Activated CD8-positive, alpha-beta T cell treated with anti-CD3 and anti-CD28 coated beads for 36 hours (primary cell): ENCODE measurements at regions of chr6 and their contacts with region 1.

Region 1: GRCh38 chr6:149545754-149546528 is at the start of gene PPIL4:
- DNase-seq: peak; percentile 97
- ATAC-seq: peak; percentile 90
- H3K4me3 Mint-ChIP-seq: peak within 1 kb of the TSS; percentile 92
- H3K27ac Mint-ChIP-seq: peak within 1 kb of the TSS; percentile 96
- H3K4me1 Mint-ChIP-seq: peaks cover 37% of the 10 kb centered on the region
- H3K27me3 Mint-ChIP-seq: no peaks in the 10 kb centered on the region
- CTCF ChIP-seq: peak; percentile 97
- total RNA-seq, gene PPIL4: 20.8 to 21.9 TPM

Region 2: DNA sequence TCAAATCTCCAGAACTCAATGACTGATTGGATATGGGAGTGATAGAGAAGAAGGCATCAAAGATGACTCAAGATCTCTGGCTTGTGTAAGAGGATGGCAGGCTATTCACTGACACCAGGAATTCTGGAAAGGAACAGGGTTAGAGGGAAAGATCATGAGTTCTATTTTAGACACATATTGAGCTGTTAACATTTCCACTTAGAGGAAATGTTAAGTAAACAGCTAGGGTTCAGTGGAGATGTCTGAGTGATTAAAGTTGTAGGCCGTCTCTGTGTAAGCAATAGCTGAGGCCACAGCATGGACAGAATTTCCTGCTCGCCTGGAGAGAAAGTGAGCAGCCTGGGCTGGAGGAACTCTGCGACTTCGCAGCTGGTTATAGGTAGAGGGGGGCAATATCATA is 82.2 kb before region 1 on chr6:
- CTCF ChIA-PET with region 1: no interaction called
- POLR2A ChIA-PET with region 1: no interaction called
- intact Hi-C with region 1: no loop called
- DNase-seq: no peak
- ATAC-seq: no peak
- H3K4me3 Mint-ChIP-seq: no peak overlapping the region
- H3K27ac Mint-ChIP-seq: no peak overlapping the region
- H3K4me1 Mint-ChIP-seq: peaks cover 24% of the 10 kb centered on the region
- H3K27me3 Mint-ChIP-seq: no peaks in the 10 kb centered on the region
- CTCF ChIP-seq: no peak

Region 3: DNA sequence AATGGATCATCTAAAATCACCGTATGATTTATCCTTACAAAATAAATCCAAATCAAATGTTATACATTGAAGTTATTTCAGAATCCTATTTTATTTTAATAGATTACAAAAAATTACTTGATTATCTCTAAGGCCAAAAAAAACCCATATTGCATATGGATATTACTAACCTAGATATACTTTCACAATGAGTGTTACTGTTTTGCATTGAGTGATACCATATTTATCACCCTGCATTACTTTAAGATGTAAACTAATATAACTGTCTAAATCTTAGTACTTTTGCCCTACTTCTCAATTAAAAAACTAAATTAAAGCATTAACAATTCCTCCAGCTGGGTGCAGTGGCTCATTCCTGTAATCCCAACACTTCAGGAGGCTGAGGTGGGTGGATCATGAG is 11.2 kb before region 1 on chr6:
- CTCF ChIA-PET with region 1: interaction called, 11 read pairs
- POLR2A ChIA-PET with region 1: no interaction called
- intact Hi-C with region 1: no loop called
- DNase-seq: no peak
- ATAC-seq: no peak
- H3K4me3 Mint-ChIP-seq: no peak overlapping the region
- H3K27ac Mint-ChIP-seq: no peak overlapping the region
- H3K4me1 Mint-ChIP-seq: peaks cover 13% of the 10 kb centered on the region
- H3K27me3 Mint-ChIP-seq: no peaks in the 10 kb centered on the region
- CTCF ChIP-seq: no peak

Region 4: DNA sequence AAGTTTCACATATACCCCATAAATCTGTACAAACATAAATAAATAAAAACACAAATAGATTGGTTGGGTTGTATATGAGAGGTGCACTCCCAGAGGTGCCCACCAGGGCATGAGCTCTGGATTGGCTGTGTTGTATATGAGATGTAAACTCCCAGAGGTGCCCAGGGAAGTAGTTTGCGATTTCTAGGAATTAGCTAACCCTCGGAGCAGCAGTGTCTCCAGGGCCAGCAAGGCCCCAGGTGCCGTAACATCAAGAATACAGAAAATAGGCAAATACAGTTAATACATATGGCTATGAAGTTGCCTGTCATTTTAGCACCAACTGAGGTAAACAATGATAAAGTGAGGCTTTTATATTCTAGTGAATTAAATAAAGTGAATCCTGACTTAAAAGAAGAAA is 14.8 kb after region 1 on chr6:
- CTCF ChIA-PET with region 1: interaction called, 27 read pairs
- POLR2A ChIA-PET with region 1: interaction called, 12 read pairs
- intact Hi-C with region 1: no loop called
- DNase-seq: peak; percentile 46
- ATAC-seq: no peak
- H3K4me3 Mint-ChIP-seq: no peak overlapping the region
- H3K27ac Mint-ChIP-seq: no peak overlapping the region
- H3K4me1 Mint-ChIP-seq: peaks cover 13% of the 10 kb centered on the region
- H3K27me3 Mint-ChIP-seq: peaks cover 3% of the 10 kb centered on the region
- CTCF ChIP-seq: peak; percentile 61

Region 5: DNA sequence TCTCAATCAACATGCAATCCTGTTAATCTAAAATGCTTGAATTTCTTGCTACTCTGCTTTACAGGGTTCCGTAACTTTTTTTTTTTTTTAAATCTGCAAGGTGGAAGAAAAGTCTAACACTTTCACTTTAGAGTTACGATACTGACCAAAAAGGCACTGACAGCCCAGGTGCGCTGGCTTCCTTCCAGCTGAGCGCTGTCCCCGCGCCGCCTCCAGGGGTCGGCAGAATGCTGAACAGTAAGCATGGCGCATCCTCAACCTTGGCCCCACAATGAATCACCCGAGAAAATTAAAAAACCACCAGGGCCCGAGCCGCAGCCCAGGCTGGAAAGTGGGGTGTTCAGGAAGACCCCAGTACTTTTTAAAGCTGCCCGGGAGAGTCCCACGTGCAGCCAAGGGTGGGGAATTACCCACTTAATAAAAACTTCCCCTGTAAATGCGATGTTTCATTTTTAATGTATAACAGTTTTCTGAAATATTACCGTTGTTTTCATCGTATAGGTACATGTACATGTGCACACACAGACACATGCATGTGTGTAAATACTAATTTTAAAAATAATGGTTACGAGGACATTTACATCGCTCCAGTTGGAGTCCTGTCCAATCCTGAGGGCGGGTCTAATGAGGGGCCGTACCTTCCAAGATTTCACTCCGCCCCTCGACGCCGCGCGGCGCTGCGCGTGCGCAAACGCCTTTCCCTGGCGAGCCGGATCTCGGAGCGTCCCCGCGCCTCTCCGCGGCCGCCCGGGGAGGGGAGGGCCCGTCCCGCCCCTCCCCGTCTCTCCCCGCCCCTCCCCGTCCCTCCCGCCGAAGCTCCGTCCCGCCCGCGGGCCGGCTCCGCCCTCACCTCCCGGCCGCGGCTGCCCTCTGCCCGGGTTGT is 19.8 kb after region 1 on chr6 and contains the start of gene GINM1:
- CTCF ChIA-PET with region 1: interaction called, 27 read pairs
- POLR2A ChIA-PET with region 1: interaction called, 12 read pairs
- intact Hi-C with region 1: no loop called
- DNase-seq: peak; percentile 97
- ATAC-seq: peak; percentile 90
- H3K4me3 Mint-ChIP-seq: peak within 1 kb of the TSS; percentile 93
- H3K27ac Mint-ChIP-seq: peak within 1 kb of the TSS; percentile 89
- H3K4me1 Mint-ChIP-seq: peaks cover 30% of the 10 kb centered on the region
- H3K27me3 Mint-ChIP-seq: no peaks in the 10 kb centered on the region
- CTCF ChIP-seq: peak; percentile 71
- total RNA-seq, gene GINM1: 15.4 to 16.3 TPM

Region 6: GRCh38 chr6:149985481-149985937 is 439.6 kb after region 1 on chr6:
- CTCF ChIA-PET with region 1: no interaction called
- POLR2A ChIA-PET with region 1: no interaction called
- intact Hi-C with region 1: no loop called
- DNase-seq: no peak
- ATAC-seq: no peak
- H3K4me3 Mint-ChIP-seq: no peak overlapping the region
- H3K27ac Mint-ChIP-seq: no peak overlapping the region
- H3K4me1 Mint-ChIP-seq: peaks cover 14% of the 10 kb centered on the region
- H3K27me3 Mint-ChIP-seq: peaks cover 75% of the 10 kb centered on the region
- CTCF ChIP-seq: no peak